ENCODE measurements at regions of chr17 and their contacts with region 1.

Region 1: DNA sequence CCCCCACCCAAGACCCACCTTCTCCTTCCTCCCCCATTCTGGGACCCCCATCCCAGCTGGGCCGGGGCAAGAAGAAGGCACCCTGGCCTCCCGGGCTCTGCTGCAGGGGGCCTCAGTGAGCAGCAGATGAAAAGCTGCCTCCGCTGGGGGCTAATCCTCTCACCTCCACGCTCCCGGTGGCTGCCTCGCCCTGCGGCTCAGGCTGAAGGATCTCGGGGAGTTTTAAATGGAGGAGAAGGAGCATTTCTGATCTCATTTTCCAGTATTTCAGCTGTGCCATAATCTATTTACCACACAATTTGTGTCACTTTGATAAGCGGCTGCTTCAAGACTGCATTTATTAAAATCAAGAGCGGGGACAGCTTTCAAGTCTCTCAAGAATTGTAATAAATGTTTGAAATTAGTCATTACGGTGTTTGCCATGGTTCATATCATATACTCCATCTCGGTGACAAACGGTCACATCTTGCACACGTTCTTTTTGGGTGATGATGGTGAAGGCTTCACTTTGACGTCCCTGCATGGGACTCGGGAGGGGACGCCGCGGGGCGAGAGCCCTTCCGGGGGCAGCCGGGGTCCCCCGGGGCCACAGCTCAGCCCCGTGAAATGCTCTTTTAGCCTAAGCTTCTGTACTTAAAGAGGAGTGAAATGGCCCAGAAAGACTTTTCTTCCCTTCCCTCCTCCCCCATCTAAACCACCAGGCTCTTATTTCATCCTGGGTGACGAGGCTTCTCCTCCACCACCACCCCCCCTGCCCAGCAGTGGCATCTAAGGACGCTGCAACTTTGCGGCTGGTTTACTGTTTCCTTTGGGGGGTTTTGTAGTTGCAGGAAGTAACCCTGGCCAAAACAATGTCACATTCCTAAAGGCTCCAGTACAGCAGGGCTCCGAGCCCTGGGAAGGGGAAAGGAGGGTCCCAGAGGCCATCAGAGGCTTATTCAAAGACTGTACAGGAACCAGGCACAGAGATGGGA is 313.1 kb upstream of the TNRC6C start:
- DNase-seq: peak; percentile 76
- ATAC-seq: peak; percentile 76
- H3K4me3 Mint-ChIP-seq: peak overlapping the region; percentile 54
- H3K27ac Mint-ChIP-seq: peak overlapping the region; percentile 82
- H3K4me1 Mint-ChIP-seq: peaks cover 37% of the 10 kb centered on the region
- H3K27me3 Mint-ChIP-seq: peaks cover 10% of the 10 kb centered on the region

Region 2: GRCh38 chr17:77542551-77543490 is 102.5 kb before region 1 on chr17:
- CTCF ChIA-PET with region 1: interaction called, 12 read pairs
- POLR2A ChIA-PET with region 1: no interaction called
- DNase-seq: peak; percentile 78
- ATAC-seq: peak; percentile 88
- H3K4me3 Mint-ChIP-seq: no peak overlapping the region
- H3K27ac Mint-ChIP-seq: no peak overlapping the region
- H3K4me1 Mint-ChIP-seq: peaks cover 7% of the 10 kb centered on the region
- H3K27me3 Mint-ChIP-seq: peaks cover 21% of the 10 kb centered on the region

Region 3: GRCh38 chr17:77555741-77556291 is 89.5 kb before region 1 on chr17:
- CTCF ChIA-PET with region 1: no interaction called
- POLR2A ChIA-PET with region 1: no interaction called
- DNase-seq: no peak
- ATAC-seq: no peak
- H3K4me3 Mint-ChIP-seq: no peak overlapping the region
- H3K27ac Mint-ChIP-seq: no peak overlapping the region
- H3K4me1 Mint-ChIP-seq: no peaks in the 10 kb centered on the region
- H3K27me3 Mint-ChIP-seq: peaks cover 17% of the 10 kb centered on the region

Region 4: GRCh38 chr17:77666881-77667395 is 21.6 kb after region 1 on chr17:
- CTCF ChIA-PET with region 1: interaction called, 37 read pairs
- POLR2A ChIA-PET with region 1: interaction called, 40 read pairs
- DNase-seq: peak; percentile 93
- ATAC-seq: peak; percentile 94
- H3K4me3 Mint-ChIP-seq: peak overlapping the region; percentile 82
- H3K27ac Mint-ChIP-seq: peak overlapping the region; percentile 97
- H3K4me1 Mint-ChIP-seq: peaks cover 51% of the 10 kb centered on the region
- H3K27me3 Mint-ChIP-seq: peaks cover 4% of the 10 kb centered on the region

Measured in activated CD8-positive, alpha-beta T cell treated with anti-CD3 and anti-CD28 coated beads, Interleukin-2, amount 10 ng/mL, durations not matched to agents 7 days and 5 days (primary cell).